Transverse colon (tissue), 4 donors: ENCODE measurements at regions of chr1 and their contacts with region 1.

Region 1: GRCh38 chr1:108746372-108747205 is at the start of gene STXBP3:
- DNase-seq: peak; percentile 100
- H3K4me3 ChIP-seq: peak within 1 kb of the TSS; percentile 68 to 87 (median 74)
- H3K27ac ChIP-seq: peak within 1 kb of the TSS; percentile 95 to 99 (median 98)
- H3K4me1 ChIP-seq: peaks cover 3 to 29% (median 8%) of the 10 kb centered on the region in 4 donors
- H3K27me3 ChIP-seq: no peaks in the 10 kb centered on the region
- CTCF ChIP-seq: peak; percentile 89 to 98 (median 93)
- EP300 ChIP-seq: peak; percentile 57
- POLR2A ChIP-seq: peak; percentile 100
- total RNA-seq, gene STXBP3: 33.3 to 134 (median 76.3) TPM

Region 2: GRCh38 chr1:108691942-108692723 is 54.5 kb before region 1 on chr1 and contains the start of gene PRPF38B:
- in situ Hi-C with region 1: loop called in 1 of 4 experiments (anchors 10 kb)
- intact Hi-C with region 1: no loop called
- DNase-seq: peak; percentile 96
- H3K4me3 ChIP-seq: peak within 1 kb of the TSS; percentile 67 to 83 (median 78)
- H3K27ac ChIP-seq: peak within 1 kb of the TSS; percentile 97 to 99 (median 98)
- H3K4me1 ChIP-seq: peaks cover 13 to 34% (median 19%) of the 10 kb centered on the region in 4 donors
- H3K27me3 ChIP-seq: no peaks in the 10 kb centered on the region
- CTCF ChIP-seq: no peak
- EP300 ChIP-seq: no peak
- POLR2A ChIP-seq: peak; percentile 95
- total RNA-seq, gene PRPF38B: 11.7 to 56.4 (median 39.2) TPM